ENCODE measurements at regions of chr15 and their contacts with region 1.

Region 1: GRCh38 chr15:44711356-44712107 is at the start of gene B2M:
- DNase-seq: peak; percentile 92
- ATAC-seq: peak; percentile 97
- H3K4me3 ChIP-seq: peak within 1 kb of the TSS; percentile 85 to 99 (median 96)
- H3K27ac ChIP-seq: peak within 1 kb of the TSS; percentile 96
- H3K4me1 ChIP-seq: peaks cover 36% of the 10 kb centered on the region
- H3K27me3 ChIP-seq: no peaks in the 10 kb centered on the region; a peak in 1 of 5 replicates
- CTCF ChIP-seq: no peak
- EP300 ChIP-seq: 0 out of 4 replicates have a peak, but pooled peaks of 1 of the 2 experiments have one; percentile 7
- POLR2A ChIP-seq: peak; percentile 100
- RAD21 ChIP-seq: no peak
- total RNA-seq, gene B2M: 530 and 784 TPM in 2 replicates

Region 2: GRCh38 chr15:44682211-44682610 is 29.3 kb before region 1 on chr15:
- CTCF ChIA-PET with region 1: no interaction called
- POLR2A ChIA-PET with region 1: interaction called, 29 read pairs
- in situ Hi-C with region 1: no loop called
- intact Hi-C with region 1: no loop called
- DNase-seq: no peak
- ATAC-seq: no peak
- H3K4me3 ChIP-seq: no peak overlapping the region
- H3K27ac ChIP-seq: no peak overlapping the region
- H3K4me1 ChIP-seq: peaks cover 15% of the 10 kb centered on the region
- H3K27me3 ChIP-seq: peaks cover 0 to 1% of the 10 kb centered on the region in 2 experiments; a peak in 2 of 5 replicates
- CTCF ChIP-seq: no peak
- EP300 ChIP-seq: no peak
- POLR2A ChIP-seq: no peak
- RAD21 ChIP-seq: no peak

Region 3: GRCh38 chr15:44728576-44729407 is 17.3 kb after region 1 on chr15:
- CTCF ChIA-PET with region 1: no interaction called
- POLR2A ChIA-PET with region 1: interaction called, 157 read pairs
- in situ Hi-C with region 1: no loop called
- intact Hi-C with region 1: loop called (anchors 2 kb)
- DNase-seq: peak; percentile 96
- ATAC-seq: peak; percentile 95
- H3K4me3 ChIP-seq: peak overlapping the region; percentile 68 to 98 (median 85)
- H3K27ac ChIP-seq: peak overlapping the region; percentile 82
- H3K4me1 ChIP-seq: peaks cover 48% of the 10 kb centered on the region
- H3K27me3 ChIP-seq: no peaks in the 10 kb centered on the region
- CTCF ChIP-seq: 0 out of 2 replicates have a peak, but pooled peaks have one; percentile 8
- EP300 ChIP-seq: no peak; a peak in 1 of 4 replicates
- POLR2A ChIP-seq: peak; percentile 60 to 73
- RAD21 ChIP-seq: 0 out of 2 replicates have a peak, but pooled peaks have one; percentile 12

Region 4: GRCh38 chr15:44738340-44738984 is 26.9 kb after region 1 on chr15:
- CTCF ChIA-PET with region 1: interaction called, 5 read pairs
- POLR2A ChIA-PET with region 1: interaction called, 32 read pairs
- in situ Hi-C with region 1: no loop called
- intact Hi-C with region 1: loop called (anchors 1 kb)
- DNase-seq: peak; percentile 47
- ATAC-seq: no peak
- H3K4me3 ChIP-seq: no peak overlapping the region
- H3K27ac ChIP-seq: no peak overlapping the region
- H3K4me1 ChIP-seq: no peaks in the 10 kb centered on the region
- H3K27me3 ChIP-seq: no peaks in the 10 kb centered on the region
- CTCF ChIP-seq: peak; percentile 64
- EP300 ChIP-seq: no peak
- POLR2A ChIP-seq: no peak
- RAD21 ChIP-seq: peak; percentile 52; the same call in 1 of the 2 replicates

Region 5: GRCh38 chr15:44769521-44769920 is 58.0 kb after region 1 on chr15:
- CTCF ChIA-PET with region 1: no interaction called
- POLR2A ChIA-PET with region 1: no interaction called
- in situ Hi-C with region 1: no loop called
- intact Hi-C with region 1: no loop called
- DNase-seq: no peak
- ATAC-seq: no peak
- H3K4me3 ChIP-seq: no peak overlapping the region
- H3K27ac ChIP-seq: no peak overlapping the region
- H3K4me1 ChIP-seq: no peaks in the 10 kb centered on the region
- H3K27me3 ChIP-seq: no peaks in the 10 kb centered on the region
- CTCF ChIP-seq: no peak
- EP300 ChIP-seq: no peak
- POLR2A ChIP-seq: no peak
- RAD21 ChIP-seq: no peak